Breast epithelium (tissue), 4 donors: ENCODE measurements at regions of chr19 and their contacts with region 1.

Region 1: GRCh38 chr19:48117515-48118130 is 7.0 kb upstream of the PLA2G4C start:
- DNase-seq: no peak
- H3K4me3 ChIP-seq: no peak overlapping the region
- H3K27ac ChIP-seq: no peak overlapping the region
- H3K4me1 ChIP-seq: no peaks in the 10 kb centered on the region
- H3K27me3 ChIP-seq: no peaks in the 10 kb centered on the region
- CTCF ChIP-seq: no peak
- POLR2A ChIP-seq: no peak

Region 2: DNA sequence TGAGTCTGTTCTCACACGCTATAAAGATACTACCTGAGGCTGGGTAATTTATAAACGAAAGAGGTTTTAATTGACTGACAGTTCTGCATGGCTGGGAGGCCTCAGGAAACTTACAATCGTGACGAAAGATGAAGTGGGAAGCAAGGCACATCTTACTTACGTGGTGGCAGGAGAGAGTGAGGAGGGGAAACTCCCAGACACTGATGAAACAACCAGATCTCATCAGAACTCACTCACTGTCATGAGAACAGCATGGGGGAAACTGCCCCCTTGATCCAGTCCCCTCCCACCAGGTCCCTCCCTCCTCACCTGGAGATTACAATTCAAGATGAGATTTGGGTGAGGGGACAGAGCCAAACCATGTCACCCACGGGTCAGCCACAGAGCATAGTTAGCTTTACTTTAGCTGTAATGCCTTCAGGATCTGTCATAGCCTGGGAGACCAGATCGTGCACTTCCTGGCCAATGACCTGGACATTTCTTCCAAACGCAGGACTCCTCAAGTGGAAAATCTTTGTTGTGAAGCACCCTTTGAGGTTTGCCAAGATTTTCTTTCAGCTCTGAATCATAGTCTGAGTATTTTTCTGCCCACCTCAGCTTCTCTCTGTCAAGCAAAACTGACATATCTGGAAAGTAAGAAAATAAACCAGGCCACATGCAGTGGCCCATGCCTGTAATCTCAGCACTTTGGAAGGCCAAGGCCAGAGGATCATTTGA is 1846.0 kb before region 1 on chr19:
- intact Hi-C with region 1: no loop called
- DNase-seq: no peak
- H3K4me3 ChIP-seq: no peak overlapping the region
- H3K27ac ChIP-seq: no peak overlapping the region
- H3K4me1 ChIP-seq: no peaks in the 10 kb centered on the region
- H3K27me3 ChIP-seq: peaks cover 0 to 2% of the 10 kb centered on the region in 2 donors
- CTCF ChIP-seq: no peak
- POLR2A ChIP-seq: no peak

Region 3: DNA sequence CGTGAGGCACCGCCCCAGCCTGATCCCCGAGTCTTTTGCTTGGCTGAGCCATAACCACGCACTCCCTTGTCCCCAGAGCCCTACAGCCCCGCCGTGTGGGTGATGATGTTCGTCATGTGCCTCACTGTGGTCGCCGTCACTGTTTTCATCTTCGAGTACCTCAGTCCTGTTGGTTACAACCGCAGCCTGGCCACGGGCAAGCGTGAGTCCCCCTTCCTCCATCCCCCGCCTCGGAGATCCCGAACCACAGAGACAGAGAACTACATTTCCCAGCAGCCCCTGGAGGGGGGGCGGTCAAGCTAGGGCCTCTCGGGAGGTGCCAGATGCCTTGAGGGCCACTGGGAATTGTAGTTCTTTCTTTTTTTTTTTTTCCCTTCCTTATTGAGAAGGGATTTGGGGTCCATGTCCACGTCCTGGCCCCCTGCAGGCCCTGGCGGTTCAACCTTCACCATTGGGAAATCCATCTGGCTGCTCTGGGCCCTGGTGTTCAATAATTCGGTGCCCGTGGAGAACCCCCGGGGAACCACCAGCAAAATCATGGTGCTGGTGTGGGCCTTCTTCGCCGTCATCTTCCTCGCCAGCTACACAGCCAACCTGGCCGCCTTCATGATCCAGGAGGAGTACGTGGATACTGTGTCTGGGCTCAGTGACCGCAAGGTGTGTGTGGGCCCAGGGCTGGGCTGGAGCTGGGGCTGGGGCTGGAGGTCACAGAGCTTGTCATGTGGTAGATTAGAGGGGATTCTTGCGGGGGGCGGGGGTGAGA is 301.7 kb after region 1 on chr19:
- intact Hi-C with region 1: no loop called
- DNase-seq: no peak
- H3K4me3 ChIP-seq: no peak overlapping the region
- H3K27ac ChIP-seq: no peak overlapping the region
- H3K4me1 ChIP-seq: no peaks in the 10 kb centered on the region
- H3K27me3 ChIP-seq: peaks cover 0 to 4% of the 10 kb centered on the region in 2 donors
- CTCF ChIP-seq: no peak
- POLR2A ChIP-seq: no peak

Region 4: GRCh38 chr19:49758292-49758691 is 1640.7 kb after region 1 on chr19:
- intact Hi-C with region 1: loop called (anchors 5 kb)
- DNase-seq: no peak
- H3K4me3 ChIP-seq: no peak overlapping the region
- H3K27ac ChIP-seq: no peak overlapping the region
- H3K4me1 ChIP-seq: no peaks in the 10 kb centered on the region
- H3K27me3 ChIP-seq: no peaks in the 10 kb centered on the region
- CTCF ChIP-seq: no peak
- POLR2A ChIP-seq: no peak